Ovary (tissue), 10 donors: ENCODE measurements at regions of chr11 and their contacts with region 1.

Region 1: GRCh38 chr11:44621140-44621681 is 55.7 kb downstream of the CD82 start:
- DNase-seq: peak; percentile 61 to 86 (median 80)
- H3K4me3 ChIP-seq: no peak overlapping the region
- H3K27ac ChIP-seq: no peak overlapping the region
- H3K4me1 ChIP-seq: no peaks in the 10 kb centered on the region
- H3K27me3 ChIP-seq: no peaks in the 10 kb centered on the region
- CTCF ChIP-seq: peak; percentile 88 to 96 (median 92)
- EP300 ChIP-seq: no peak
- POLR2A ChIP-seq: no peak

Region 2: GRCh38 chr11:44286268-44286880 is 334.8 kb before region 1 on chr11:
- intact Hi-C with region 1: loop called in 1 of 4 experiments (anchors 10 kb)
- DNase-seq: peak in 3 of 5 donors; percentile 36 to 54 (median 40)
- H3K4me3 ChIP-seq: no peak overlapping the region
- H3K27ac ChIP-seq: no peak overlapping the region
- H3K4me1 ChIP-seq: no peaks in the 10 kb centered on the region
- H3K27me3 ChIP-seq: no peaks in the 10 kb centered on the region
- CTCF ChIP-seq: peak; percentile 38 to 65 (median 64)
- EP300 ChIP-seq: no peak
- POLR2A ChIP-seq: no peak

Region 3: GRCh38 chr11:44556735-44557409 is 64.3 kb before region 1 on chr11:
- intact Hi-C with region 1: loop called in 3 of 4 experiments (anchors 1 to 2 kb)
- DNase-seq: peak; percentile 68 to 80 (median 78)
- H3K4me3 ChIP-seq: no peak overlapping the region
- H3K27ac ChIP-seq: no peak overlapping the region
- H3K4me1 ChIP-seq: no peaks in the 10 kb centered on the region
- H3K27me3 ChIP-seq: no peaks in the 10 kb centered on the region
- CTCF ChIP-seq: peak; percentile 66 to 85 (median 83)
- EP300 ChIP-seq: no peak
- POLR2A ChIP-seq: no peak

Region 4: DNA sequence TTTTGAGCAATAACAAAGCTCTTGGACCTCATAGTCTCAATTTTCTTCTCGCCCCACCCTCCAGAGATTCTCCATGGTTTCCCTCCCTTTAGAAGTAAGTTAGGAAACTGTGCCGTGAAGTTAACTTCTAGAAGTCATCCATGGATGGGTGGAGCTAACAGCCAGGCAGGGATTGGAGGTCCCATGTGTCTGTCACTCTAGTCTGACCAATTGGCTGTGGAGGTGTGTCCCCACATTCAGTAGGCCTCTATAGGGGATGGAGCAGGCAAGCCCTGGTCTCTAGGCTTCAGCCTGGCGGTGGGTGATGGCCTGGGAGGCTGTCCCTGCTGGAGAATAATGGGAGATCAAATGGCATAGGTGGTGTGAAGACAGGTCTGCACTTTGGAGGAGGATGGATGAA is 278.7 kb after region 1 on chr11:
- intact Hi-C with region 1: loop called in 1 of 4 experiments (anchors 5 kb)
- DNase-seq: no peak
- H3K4me3 ChIP-seq: no peak overlapping the region
- H3K27ac ChIP-seq: no peak overlapping the region
- H3K4me1 ChIP-seq: no peaks in the 10 kb centered on the region
- H3K27me3 ChIP-seq: no peaks in the 10 kb centered on the region
- CTCF ChIP-seq: no peak
- EP300 ChIP-seq: no peak
- POLR2A ChIP-seq: no peak

Region 5: DNA sequence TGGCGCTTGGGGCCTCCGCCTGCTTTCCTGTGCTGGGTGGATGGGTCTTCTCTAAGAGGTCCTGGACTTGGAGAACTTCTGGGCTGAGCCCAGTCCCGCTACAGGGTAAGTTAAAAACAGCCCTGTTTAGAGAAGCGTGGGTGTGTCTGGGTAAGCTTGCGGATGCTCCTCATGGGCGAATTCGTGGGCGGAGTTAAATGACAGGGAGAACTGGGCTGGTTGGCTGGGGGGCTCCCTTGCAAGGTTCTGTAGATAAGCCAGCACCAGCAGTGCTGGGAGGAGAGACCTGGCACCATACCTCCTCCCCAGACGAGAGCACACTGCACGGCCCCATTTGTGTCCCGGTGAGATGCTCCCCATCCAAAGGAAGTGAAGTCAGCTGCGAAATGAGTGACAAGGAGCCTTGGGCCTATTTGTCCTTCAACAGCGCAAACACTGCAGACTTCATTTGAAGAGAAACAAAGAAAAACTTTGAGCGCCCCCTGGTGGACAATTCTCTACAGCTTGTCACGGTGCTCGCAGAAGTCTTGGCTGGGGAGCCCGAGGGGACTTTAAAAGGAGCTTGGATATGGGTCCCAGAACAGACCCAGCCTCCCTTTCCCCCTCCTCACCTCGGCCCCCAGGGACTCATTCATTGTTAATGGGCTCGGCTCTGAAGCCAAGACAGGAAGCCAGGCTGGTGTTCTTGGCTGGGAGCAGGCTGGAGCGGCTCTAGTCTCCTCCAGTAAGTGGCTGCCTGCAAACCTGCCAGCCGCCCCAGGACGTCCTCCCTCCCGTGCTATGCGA is 290.0 kb after region 1 on chr11:
- intact Hi-C with region 1: loop called (anchors 2 to 5 kb)
- DNase-seq: peak; percentile 77 to 92 (median 85)
- H3K4me3 ChIP-seq: no peak overlapping the region
- H3K27ac ChIP-seq: no peak overlapping the region
- H3K4me1 ChIP-seq: no peaks in the 10 kb centered on the region
- H3K27me3 ChIP-seq: no peaks in the 10 kb centered on the region
- CTCF ChIP-seq: peak; percentile 74 to 78 (median 76)
- EP300 ChIP-seq: no peak
- POLR2A ChIP-seq: no peak

Region 6: DNA sequence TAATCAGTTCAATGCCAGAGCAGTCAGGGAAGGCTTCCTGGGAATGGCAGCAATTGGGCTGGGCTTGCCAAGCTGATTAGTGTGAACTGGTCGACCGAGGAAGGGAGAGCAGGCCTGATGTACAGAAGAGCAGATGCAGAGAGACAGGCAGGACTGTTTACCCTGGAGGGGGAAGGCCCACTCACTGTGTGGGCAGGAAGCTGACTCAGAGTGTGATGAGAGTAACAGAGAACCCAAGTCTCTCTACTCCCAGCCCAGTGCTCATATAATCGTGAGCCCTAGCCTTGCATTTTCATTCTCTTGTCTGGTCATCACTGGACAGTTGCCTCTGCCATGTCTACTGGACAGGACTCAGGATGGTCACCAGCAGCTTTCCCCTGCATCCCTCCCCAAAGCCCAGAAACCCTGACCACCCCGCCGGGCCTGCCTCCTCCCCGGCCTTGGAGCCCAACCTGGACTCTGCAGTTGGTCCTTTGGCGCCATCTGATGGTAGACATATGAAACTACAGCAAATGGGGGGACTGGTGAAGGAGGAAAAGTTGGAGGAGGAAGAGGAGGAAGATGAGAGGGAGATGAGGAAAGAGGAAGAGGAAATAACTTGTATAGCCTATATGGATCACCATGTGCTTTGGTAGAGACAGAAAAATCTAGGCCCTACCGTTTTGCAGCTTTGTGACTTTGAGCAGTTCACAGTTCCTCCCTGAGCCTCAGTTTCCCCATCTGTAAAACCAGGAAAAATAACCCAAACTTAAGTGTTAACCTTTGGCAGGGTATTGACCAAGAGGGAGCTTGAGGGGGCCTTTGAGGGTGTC is 481.8 kb after region 1 on chr11:
- intact Hi-C with region 1: loop called in 1 of 4 experiments (anchors 10 kb)
- DNase-seq: peak in 3 of 5 donors; percentile 40 to 46 (median 43)
- H3K4me3 ChIP-seq: no peak overlapping the region
- H3K27ac ChIP-seq: no peak overlapping the region
- H3K4me1 ChIP-seq: no peaks in the 10 kb centered on the region
- H3K27me3 ChIP-seq: no peaks in the 10 kb centered on the region
- CTCF ChIP-seq: peak; percentile 58 to 83 (median 79)
- EP300 ChIP-seq: no peak
- POLR2A ChIP-seq: no peak